H1 (cell line): ENCODE measurements at regions of chr6 and their contacts with region 1.

Region 1: DNA sequence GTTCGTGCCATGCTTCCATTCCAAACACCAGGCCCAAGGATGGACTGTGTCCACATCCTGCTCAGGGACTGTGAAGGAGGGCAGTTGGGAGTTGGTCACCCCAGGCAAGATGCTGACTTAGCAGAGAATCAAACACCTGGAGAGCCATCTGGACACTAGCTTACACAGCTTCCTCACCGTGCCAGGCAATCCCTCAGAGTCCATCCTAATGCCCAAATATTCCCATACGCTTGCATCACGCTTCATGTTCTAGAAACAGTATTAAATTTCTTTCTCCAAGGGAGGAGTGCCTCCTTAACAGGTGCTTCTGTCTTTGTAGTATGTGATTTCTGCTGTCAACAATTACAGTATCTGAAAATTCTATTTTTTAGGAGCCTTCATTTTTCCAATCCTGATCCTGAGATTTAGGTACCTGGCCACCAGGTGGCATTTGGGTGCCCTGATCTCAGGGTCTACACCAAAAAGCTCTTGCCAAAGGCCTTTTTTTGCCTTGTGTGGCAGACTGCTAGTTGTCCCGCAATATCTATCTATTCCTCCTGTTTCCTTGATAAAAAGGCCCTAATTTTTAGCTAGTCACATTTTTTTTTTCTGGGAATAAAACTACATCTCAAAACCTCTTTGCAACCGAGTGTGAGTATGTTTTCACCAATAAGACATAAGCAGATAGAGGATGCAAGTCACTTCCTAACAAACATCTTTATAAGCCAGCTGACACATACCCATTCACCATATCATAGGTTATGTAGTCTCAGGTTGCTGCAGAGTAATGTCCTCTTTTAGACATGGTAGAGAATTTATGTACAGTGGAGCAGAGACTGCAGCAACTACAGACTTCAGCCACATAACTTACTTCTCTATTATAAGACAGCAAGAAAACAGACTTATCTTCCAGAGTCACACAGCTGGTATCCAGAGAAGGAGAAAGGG is 85.0 kb downstream of the PREP start:
- DNase-seq: no peak
- H3K4me3 ChIP-seq: no peak overlapping the region
- H3K27ac ChIP-seq: no peak overlapping the region
- H3K4me1 ChIP-seq: no peaks in the 10 kb centered on the region
- H3K27me3 ChIP-seq: no peaks in the 10 kb centered on the region
- CTCF ChIP-seq: peak; percentile 20 to 64 (median 63)
- EP300 ChIP-seq: no peak
- POLR2A ChIP-seq: no peak
- RAD21 ChIP-seq: peak; percentile 58 to 62

Region 2: GRCh38 chr6:105077596-105078385 is 240.1 kb before region 1 on chr6:
- CTCF ChIA-PET with region 1: no interaction called
- POLR2A ChIA-PET with region 1: no interaction called
- DNase-seq: no peak
- H3K4me3 ChIP-seq: no peak overlapping the region
- H3K27ac ChIP-seq: no peak overlapping the region
- H3K4me1 ChIP-seq: no peaks in the 10 kb centered on the region
- H3K27me3 ChIP-seq: no peaks in the 10 kb centered on the region
- CTCF ChIP-seq: peak in 2 of 3 experiments; percentile 24 to 31; a peak in 2 of 4 replicates
- EP300 ChIP-seq: no peak
- POLR2A ChIP-seq: no peak
- RAD21 ChIP-seq: peak; percentile 63 to 74

Region 3: DNA sequence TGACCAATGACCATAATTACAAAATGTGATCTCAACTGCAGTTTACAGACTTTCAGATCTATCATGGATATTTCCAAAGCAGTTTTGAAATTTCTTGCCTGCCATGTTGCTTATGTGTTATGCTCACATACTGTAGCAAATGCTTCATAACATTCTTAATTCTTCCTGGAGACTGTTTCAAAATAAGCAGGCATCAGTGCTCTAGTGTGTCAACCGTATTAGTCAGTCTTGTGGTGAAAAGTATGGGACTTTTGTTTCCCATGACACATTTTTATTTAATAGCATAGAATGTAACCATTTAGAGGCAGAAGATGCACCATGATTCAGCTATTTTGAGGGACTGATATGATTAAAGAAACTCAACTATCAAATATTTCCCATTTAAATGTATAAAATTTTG is 139.8 kb before region 1 on chr6:
- CTCF ChIA-PET with region 1: no interaction called
- POLR2A ChIA-PET with region 1: no interaction called
- DNase-seq: no peak
- H3K4me3 ChIP-seq: no peak overlapping the region
- H3K27ac ChIP-seq: no peak overlapping the region
- H3K4me1 ChIP-seq: peaks cover 0 to 17% (median 5%) of the 10 kb centered on the region in 4 experiments; a peak in 4 of 7 replicates
- H3K27me3 ChIP-seq: peaks cover 0 to 3% (median 0%) of the 10 kb centered on the region in 4 experiments; a peak in 3 of 7 replicates
- CTCF ChIP-seq: no peak
- EP300 ChIP-seq: no peak
- POLR2A ChIP-seq: no peak
- RAD21 ChIP-seq: no peak

Region 4: GRCh38 chr6:105263685-105264610 is 53.9 kb before region 1 on chr6:
- CTCF ChIA-PET with region 1: no interaction called
- POLR2A ChIA-PET with region 1: no interaction called
- DNase-seq: no peak
- H3K4me3 ChIP-seq: no peak overlapping the region
- H3K27ac ChIP-seq: no peak overlapping the region
- H3K4me1 ChIP-seq: peaks cover 0 to 15% (median 6%) of the 10 kb centered on the region in 4 experiments; a peak in 2 of 7 replicates
- H3K27me3 ChIP-seq: peaks cover 0 to 1% (median 0%) of the 10 kb centered on the region in 4 experiments; a peak in 1 of 7 replicates
- CTCF ChIP-seq: no peak
- EP300 ChIP-seq: no peak
- POLR2A ChIP-seq: no peak
- RAD21 ChIP-seq: no peak

Region 5: DNA sequence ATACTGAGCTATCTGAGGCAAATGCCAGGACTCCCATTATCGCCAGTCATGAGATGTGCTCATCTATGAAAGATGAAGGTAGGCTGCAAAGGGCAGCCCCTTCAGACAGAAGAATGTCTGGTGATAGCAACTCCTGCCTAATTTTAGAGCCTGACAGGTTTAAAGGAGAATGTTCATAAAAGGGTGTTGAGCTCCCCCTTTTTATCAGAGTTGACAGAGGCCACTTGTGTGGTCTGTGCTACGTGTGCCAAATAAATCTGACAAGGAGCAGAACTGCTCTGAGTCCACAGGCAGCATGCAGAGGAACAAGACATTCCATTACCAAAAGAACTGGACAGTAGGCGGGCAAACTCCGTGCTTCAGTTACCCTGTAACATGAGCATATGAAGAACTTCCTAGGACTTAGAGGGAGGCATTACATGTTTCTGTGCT is 16.8 kb before region 1 on chr6:
- CTCF ChIA-PET with region 1: interaction called, 36 read pairs
- POLR2A ChIA-PET with region 1: interaction called, 5 read pairs
- DNase-seq: no peak
- H3K4me3 ChIP-seq: no peak overlapping the region
- H3K27ac ChIP-seq: no peak overlapping the region
- H3K4me1 ChIP-seq: peaks cover 2 to 6% (median 3%) of the 10 kb centered on the region in 4 experiments; a peak in 4 of 7 replicates
- H3K27me3 ChIP-seq: no peaks in the 10 kb centered on the region
- CTCF ChIP-seq: no peak
- EP300 ChIP-seq: no peak
- POLR2A ChIP-seq: no peak
- RAD21 ChIP-seq: no peak

Region 6: DNA sequence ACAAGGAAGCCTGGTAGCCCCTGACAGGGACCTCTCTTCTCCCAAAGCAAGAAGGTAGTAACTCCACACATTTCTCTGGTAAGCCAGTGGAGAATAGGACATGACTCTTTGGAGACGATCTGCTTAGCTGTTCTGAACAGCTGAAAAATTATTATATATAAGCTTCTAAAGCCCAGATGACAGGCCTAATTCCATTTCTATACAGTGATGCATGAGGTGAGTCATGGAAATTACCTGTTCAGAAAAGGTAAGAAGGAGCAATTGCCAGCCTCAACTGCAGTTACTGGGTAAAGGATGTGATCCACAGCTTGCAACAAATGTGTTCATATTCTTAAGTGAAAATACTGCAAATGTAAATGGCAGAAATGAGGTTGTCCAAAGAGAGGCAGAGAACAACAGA is 31.0 kb after region 1 on chr6:
- CTCF ChIA-PET with region 1: interaction called, 17 read pairs
- POLR2A ChIA-PET with region 1: no interaction called
- DNase-seq: no peak
- H3K4me3 ChIP-seq: no peak overlapping the region
- H3K27ac ChIP-seq: no peak overlapping the region
- H3K4me1 ChIP-seq: no peaks in the 10 kb centered on the region
- H3K27me3 ChIP-seq: no peaks in the 10 kb centered on the region
- CTCF ChIP-seq: no peak
- EP300 ChIP-seq: no peak
- POLR2A ChIP-seq: no peak
- RAD21 ChIP-seq: no peak

Region 7: DNA sequence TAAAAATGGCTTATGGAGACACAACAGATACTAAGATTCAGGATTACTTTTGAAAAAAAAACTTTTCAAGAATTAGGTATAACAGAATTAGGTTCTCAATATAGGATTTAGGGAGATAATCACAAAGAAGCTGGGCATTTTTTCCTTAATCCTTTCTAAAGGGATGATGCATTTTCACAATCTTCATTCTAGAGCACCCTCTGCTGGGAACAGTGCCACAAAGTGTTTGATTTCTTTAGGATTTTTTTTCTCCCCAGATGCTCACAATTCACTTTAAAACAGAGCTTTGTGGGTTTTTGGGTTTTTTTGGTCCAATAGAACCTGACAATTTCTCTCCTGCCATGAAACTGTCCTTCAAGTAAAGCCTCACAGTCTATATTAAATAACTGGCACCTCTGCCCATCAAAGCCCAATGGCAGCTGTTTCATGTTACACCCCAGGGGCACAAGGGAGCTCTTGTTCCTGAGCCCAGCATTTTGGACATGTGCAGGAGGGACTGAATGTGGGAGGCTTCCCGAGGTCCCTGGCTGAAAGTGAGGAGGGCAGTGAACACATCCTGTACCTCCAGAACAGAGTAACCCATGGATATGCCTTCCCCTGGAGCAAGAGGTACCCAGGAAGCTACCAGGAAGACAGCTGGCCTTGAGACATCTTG is 45.4 kb after region 1 on chr6:
- CTCF ChIA-PET with region 1: interaction called, 47 read pairs
- POLR2A ChIA-PET with region 1: no interaction called
- DNase-seq: no peak
- H3K4me3 ChIP-seq: no peak overlapping the region
- H3K27ac ChIP-seq: no peak overlapping the region
- H3K4me1 ChIP-seq: no peaks in the 10 kb centered on the region
- H3K27me3 ChIP-seq: peaks cover 0 to 1% (median 0%) of the 10 kb centered on the region in 4 experiments; a peak in 1 of 7 replicates
- CTCF ChIP-seq: peak in 2 of 3 experiments; percentile 14 to 15; a peak in 2 of 4 replicates
- EP300 ChIP-seq: no peak
- POLR2A ChIP-seq: no peak
- RAD21 ChIP-seq: peak; percentile 46 to 49

Region 8: GRCh38 chr6:105374010-105374420 is 56.1 kb after region 1 on chr6:
- CTCF ChIA-PET with region 1: interaction called, 10 read pairs
- POLR2A ChIA-PET with region 1: no interaction called
- DNase-seq: no peak
- H3K4me3 ChIP-seq: no peak overlapping the region
- H3K27ac ChIP-seq: no peak overlapping the region
- H3K4me1 ChIP-seq: no peaks in the 10 kb centered on the region
- H3K27me3 ChIP-seq: no peaks in the 10 kb centered on the region
- CTCF ChIP-seq: no peak
- EP300 ChIP-seq: no peak
- POLR2A ChIP-seq: no peak
- RAD21 ChIP-seq: no peak

Region 9: GRCh38 chr6:105459884-105460283 is 142.0 kb after region 1 on chr6:
- CTCF ChIA-PET with region 1: no interaction called
- POLR2A ChIA-PET with region 1: no interaction called
- DNase-seq: no peak
- H3K4me3 ChIP-seq: no peak overlapping the region
- H3K27ac ChIP-seq: no peak overlapping the region
- H3K4me1 ChIP-seq: no peaks in the 10 kb centered on the region
- H3K27me3 ChIP-seq: no peaks in the 10 kb centered on the region
- CTCF ChIP-seq: no peak
- EP300 ChIP-seq: no peak
- POLR2A ChIP-seq: no peak
- RAD21 ChIP-seq: no peak